Heart left ventricle (tissue), 16 donors: ENCODE measurements at regions of chr9 and their contacts with region 1.

Region 1: DNA sequence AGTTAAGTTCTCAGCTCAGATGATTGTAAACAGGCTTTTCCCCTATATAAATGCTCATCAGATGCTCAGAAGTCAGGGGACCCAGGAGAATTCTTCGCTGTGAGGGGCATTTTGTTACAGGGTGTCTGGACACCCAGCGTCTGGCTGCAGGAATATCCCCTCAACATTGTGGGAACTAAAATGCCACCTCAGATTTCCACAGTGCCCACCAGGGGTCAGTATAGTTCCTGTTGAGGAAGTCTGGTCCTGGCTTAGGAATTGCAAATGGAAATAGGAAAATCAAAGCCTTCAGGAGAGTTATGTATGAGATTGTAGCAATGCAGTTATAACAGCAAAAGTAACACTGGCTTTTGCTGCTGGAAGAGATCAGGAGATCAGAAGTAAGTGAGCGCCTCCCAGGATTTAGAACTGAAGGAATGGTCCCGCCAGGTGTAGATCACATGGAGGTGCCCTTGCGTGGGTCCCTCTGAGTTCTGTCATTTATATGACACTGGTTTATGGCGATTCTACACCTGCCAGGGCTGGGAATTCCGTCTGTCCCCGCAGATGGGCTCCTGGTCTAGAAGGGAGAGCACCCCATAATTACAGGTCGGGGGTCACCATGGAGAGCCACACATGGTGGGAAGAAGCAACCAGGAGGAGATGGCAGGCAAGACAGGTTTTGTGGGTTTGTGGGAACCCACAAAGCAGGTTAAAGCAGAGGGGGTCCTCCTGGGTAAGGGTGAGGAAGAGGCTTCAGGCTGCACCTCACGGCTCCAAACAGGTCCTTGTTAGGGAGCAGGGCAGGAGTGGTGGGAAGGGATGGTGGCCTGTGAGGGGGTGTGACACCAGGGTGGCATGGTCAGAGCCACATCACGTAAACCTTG is 47.0 kb upstream of the CTSL start:
- DNase-seq: peak in 3 of 5 donors; percentile 48 to 64 (median 51)
- ATAC-seq: peak in 2 of 4 donors; percentile 45 to 51
- H3K4me3 ChIP-seq: no peak overlapping the region
- H3K27ac ChIP-seq: no peak overlapping the region
- H3K4me1 ChIP-seq: peaks cover 0 to 12% (median 0%) of the 10 kb centered on the region in 12 donors
- H3K27me3 ChIP-seq: no peaks in the 10 kb centered on the region
- CTCF ChIP-seq: peak; percentile 73 to 90 (median 80)
- POLR2A ChIP-seq: no peak

Region 2: GRCh38 chr9:87569518-87569917 is 109.4 kb before region 1 on chr9:
- intact Hi-C with region 1: no loop called
- DNase-seq: no peak
- ATAC-seq: peak in 3 of 4 donors; percentile 37 to 57 (median 49)
- H3K4me3 ChIP-seq: no peak overlapping the region
- H3K27ac ChIP-seq: peak overlapping the region in 1 of 12 donors; percentile 39
- H3K4me1 ChIP-seq: peaks cover 0 to 29% (median 3%) of the 10 kb centered on the region in 12 donors
- H3K27me3 ChIP-seq: no peaks in the 10 kb centered on the region
- CTCF ChIP-seq: no peak
- POLR2A ChIP-seq: no peak

Region 3: GRCh38 chr9:87622923-87623322 is 56.0 kb before region 1 on chr9:
- intact Hi-C with region 1: no loop called
- DNase-seq: no peak
- ATAC-seq: no peak
- H3K4me3 ChIP-seq: no peak overlapping the region
- H3K27ac ChIP-seq: no peak overlapping the region
- H3K4me1 ChIP-seq: peaks cover 0 to 3% (median 0%) of the 10 kb centered on the region in 12 donors
- H3K27me3 ChIP-seq: no peaks in the 10 kb centered on the region
- CTCF ChIP-seq: no peak
- POLR2A ChIP-seq: no peak

Region 4: GRCh38 chr9:87732756-87733155 is 53.9 kb after region 1 on chr9:
- intact Hi-C with region 1: loop called in 1 of 10 experiments (anchors 10 kb)
- DNase-seq: no peak
- ATAC-seq: no peak
- H3K4me3 ChIP-seq: no peak overlapping the region
- H3K27ac ChIP-seq: no peak overlapping the region
- H3K4me1 ChIP-seq: peaks cover 0 to 29% (median 8%) of the 10 kb centered on the region in 12 donors
- H3K27me3 ChIP-seq: peaks cover 0 to 13% (median 0%) of the 10 kb centered on the region in 9 donors
- CTCF ChIP-seq: no peak
- POLR2A ChIP-seq: no peak

Region 5: DNA sequence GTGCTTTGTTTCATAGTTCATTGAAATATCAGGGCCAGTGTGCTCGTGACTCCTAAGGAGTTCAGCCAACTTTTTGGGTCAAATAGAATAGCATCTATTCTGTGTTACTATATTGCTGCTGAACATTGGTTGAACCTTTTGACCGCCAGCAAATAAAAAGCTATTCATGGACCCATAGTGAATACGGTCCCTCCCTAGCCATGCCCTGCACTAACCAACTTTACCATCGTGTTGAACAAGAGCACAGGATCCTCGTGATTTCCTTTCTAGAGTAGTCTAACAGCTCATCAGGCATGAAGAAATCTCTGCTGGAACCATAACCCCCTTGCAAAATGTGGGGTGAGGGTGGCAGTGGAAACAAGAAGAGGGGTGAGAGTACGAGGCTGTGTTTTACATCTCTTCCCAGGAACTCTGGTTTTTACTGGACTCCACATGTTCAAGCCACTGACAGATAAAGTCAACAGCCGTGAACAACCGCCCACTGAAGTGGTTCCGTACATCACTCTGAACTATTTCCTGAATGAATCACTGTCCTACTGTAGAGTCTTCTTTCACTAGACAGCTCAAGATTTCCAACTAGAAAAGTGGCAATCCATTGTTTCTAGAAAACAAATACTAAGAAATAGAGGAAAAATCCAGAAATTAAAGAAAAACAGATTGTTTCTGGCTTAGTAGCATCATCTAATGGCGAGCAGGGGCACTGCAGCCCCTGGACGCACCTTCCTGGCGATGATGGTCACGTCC is 133.7 kb after region 1 on chr9:
- intact Hi-C with region 1: loop called in 9 of 10 experiments (anchors 1 to 5 kb)
- DNase-seq: no peak
- ATAC-seq: peak in 3 of 4 donors; percentile 46 to 62 (median 56)
- H3K4me3 ChIP-seq: no peak overlapping the region
- H3K27ac ChIP-seq: no peak overlapping the region
- H3K4me1 ChIP-seq: peaks cover 0 to 16% (median 0%) of the 10 kb centered on the region in 12 donors
- H3K27me3 ChIP-seq: peaks cover 0 to 23% (median 0%) of the 10 kb centered on the region in 9 donors
- CTCF ChIP-seq: peak; percentile 78 to 94 (median 90)
- POLR2A ChIP-seq: no peak

Region 6: DNA sequence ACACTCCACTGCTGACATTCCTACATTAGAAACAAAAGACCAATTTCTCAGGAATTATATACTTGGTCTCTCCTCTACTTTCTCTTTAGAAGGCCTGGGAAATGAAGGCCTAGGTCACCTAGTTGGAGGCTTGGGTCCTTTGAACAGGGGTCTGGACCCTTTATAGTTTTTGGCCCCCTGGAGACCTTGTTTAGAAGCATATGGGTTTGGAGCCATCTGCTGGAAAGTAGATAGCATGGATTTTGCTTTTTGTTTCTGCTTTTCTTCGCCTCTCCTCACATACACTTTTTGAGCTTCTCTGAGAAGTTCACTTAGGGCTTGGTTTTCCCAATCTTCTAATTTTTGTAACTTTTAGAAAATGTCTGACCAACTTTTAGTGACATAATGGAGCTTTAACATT is 362.6 kb after region 1 on chr9:
- intact Hi-C with region 1: loop called (anchors 2 to 10 kb)
- DNase-seq: no peak
- ATAC-seq: no peak
- H3K4me3 ChIP-seq: no peak overlapping the region
- H3K27ac ChIP-seq: no peak overlapping the region
- H3K4me1 ChIP-seq: no peaks in the 10 kb centered on the region
- H3K27me3 ChIP-seq: no peaks in the 10 kb centered on the region
- CTCF ChIP-seq: peak in 8 of 12 donors; percentile 12 to 47 (median 32)
- POLR2A ChIP-seq: no peak